ENCODE measurements at regions of chr16 and their contacts with region 1.

Region 1: GRCh38 chr16:24988593-24989338 is 26.4 kb downstream of the ARHGAP17 start:
- DNase-seq: no peak
- ATAC-seq: peak in 1 of 2 donors; percentile 22
- H3K4me3 ChIP-seq: peak overlapping the region in 2 of 4 donors; percentile 1 to 27
- H3K27ac ChIP-seq: peak overlapping the region; percentile 76 to 89 (median 82)
- H3K4me1 ChIP-seq: peaks cover 93 to 95% of the 10 kb centered on the region in 2 donors
- H3K27me3 ChIP-seq: no peaks in the 10 kb centered on the region
- CTCF ChIP-seq: no peak
- POLR2A ChIP-seq: no peak

Region 2: GRCh38 chr16:24471561-24472350 is 517.0 kb before region 1 on chr16:
- in situ Hi-C with region 1: no loop called
- intact Hi-C with region 1: no loop called
- DNase-seq: no peak
- ATAC-seq: no peak
- H3K4me3 ChIP-seq: no peak overlapping the region
- H3K27ac ChIP-seq: no peak overlapping the region
- H3K4me1 ChIP-seq: no peaks in the 10 kb centered on the region
- H3K27me3 ChIP-seq: no peaks in the 10 kb centered on the region
- CTCF ChIP-seq: no peak
- POLR2A ChIP-seq: no peak

Region 3: GRCh38 chr16:24609740-24610415 is 378.9 kb before region 1 on chr16:
- in situ Hi-C with region 1: no loop called
- intact Hi-C with region 1: no loop called
- DNase-seq: no peak
- ATAC-seq: no peak
- H3K4me3 ChIP-seq: peak overlapping the region in 3 of 4 donors; percentile 12 to 36 (median 16)
- H3K27ac ChIP-seq: no peak overlapping the region
- H3K4me1 ChIP-seq: peaks cover 0 to 5% of the 10 kb centered on the region in 2 donors
- H3K27me3 ChIP-seq: peaks cover 8 to 13% (median 10%) of the 10 kb centered on the region in 3 donors
- CTCF ChIP-seq: no peak
- POLR2A ChIP-seq: no peak

Region 4: GRCh38 chr16:24748242-24748641 is 240.5 kb before region 1 on chr16:
- in situ Hi-C with region 1: no loop called
- intact Hi-C with region 1: loop called (anchors 10 kb)
- DNase-seq: peak; percentile 83 to 87
- ATAC-seq: peak; percentile 93 to 99
- H3K4me3 ChIP-seq: peak overlapping the region in 1 of 4 donors; percentile 13
- H3K27ac ChIP-seq: peak overlapping the region; percentile 83 to 90 (median 86)
- H3K4me1 ChIP-seq: peaks cover 95 to 100% of the 10 kb centered on the region in 2 donors
- H3K27me3 ChIP-seq: no peaks in the 10 kb centered on the region
- CTCF ChIP-seq: no peak
- POLR2A ChIP-seq: peak; percentile 28 to 71

Region 5: GRCh38 chr16:24896439-24896838 is 92.3 kb before region 1 on chr16:
- in situ Hi-C with region 1: no loop called
- intact Hi-C with region 1: no loop called
- DNase-seq: no peak
- ATAC-seq: no peak
- H3K4me3 ChIP-seq: no peak overlapping the region
- H3K27ac ChIP-seq: no peak overlapping the region
- H3K4me1 ChIP-seq: no peaks in the 10 kb centered on the region
- H3K27me3 ChIP-seq: no peaks in the 10 kb centered on the region
- CTCF ChIP-seq: no peak
- POLR2A ChIP-seq: no peak